Thyroid gland (tissue), 4 donors: ENCODE measurements at regions of chr9 and their contacts with region 1.

Region 1: GRCh38 chr9:26856413-26857032 is 36.1 kb downstream of the CAAP1 start:
- DNase-seq: peak; percentile 36 to 42
- H3K4me3 ChIP-seq: no peak overlapping the region
- H3K27ac ChIP-seq: no peak overlapping the region
- H3K4me1 ChIP-seq: no peaks in the 10 kb centered on the region
- H3K27me3 ChIP-seq: no peaks in the 10 kb centered on the region
- CTCF ChIP-seq: peak in 4 of 6 experiments; percentile 54 to 67 (median 61)
- POLR2A ChIP-seq: no peak

Region 2: DNA sequence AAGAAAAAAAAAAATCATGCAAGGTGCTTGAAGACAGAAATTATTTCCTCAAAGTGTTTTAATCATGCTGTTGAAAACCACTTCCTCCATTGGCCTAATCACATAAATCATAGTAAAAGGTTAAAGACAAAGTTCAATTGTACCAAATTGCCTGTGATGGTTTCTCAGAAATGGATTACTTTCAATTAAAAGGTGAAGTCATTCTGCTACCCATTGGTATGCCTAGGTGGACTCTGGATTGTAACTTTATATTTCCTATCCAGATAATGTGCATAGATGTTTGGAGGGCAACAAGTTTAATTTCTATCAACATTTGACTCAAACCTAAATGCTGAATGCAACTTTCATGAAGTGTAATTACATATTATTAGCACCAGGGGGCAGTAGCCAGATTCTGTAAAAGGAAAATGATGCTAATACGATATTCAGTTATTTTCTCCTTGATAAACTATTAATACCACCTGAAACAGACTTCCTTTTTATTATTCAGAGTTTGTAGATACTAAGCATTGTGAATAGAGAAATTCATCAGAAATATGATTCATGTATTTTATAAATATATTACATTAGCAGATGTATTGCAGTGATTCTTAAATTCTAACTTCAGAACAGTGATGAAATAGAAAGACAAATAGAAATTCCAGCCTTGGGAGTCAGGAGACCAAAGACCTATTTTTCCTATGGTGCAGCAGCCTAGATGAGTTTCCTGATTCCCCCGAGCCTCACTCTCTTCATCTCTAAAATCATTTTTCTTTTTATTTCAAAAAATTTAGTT is 112.1 kb before region 1 on chr9:
- intact Hi-C with region 1: loop called (anchors 5 kb)
- DNase-seq: no peak
- H3K4me3 ChIP-seq: no peak overlapping the region
- H3K27ac ChIP-seq: no peak overlapping the region
- H3K4me1 ChIP-seq: no peaks in the 10 kb centered on the region
- H3K27me3 ChIP-seq: no peaks in the 10 kb centered on the region
- CTCF ChIP-seq: peak; percentile 21 to 73 (median 66)
- POLR2A ChIP-seq: no peak